Lower lobe of right lung (tissue), 2 donors: ENCODE measurements at regions of chr17 and their contacts with region 1.

Region 1: DNA sequence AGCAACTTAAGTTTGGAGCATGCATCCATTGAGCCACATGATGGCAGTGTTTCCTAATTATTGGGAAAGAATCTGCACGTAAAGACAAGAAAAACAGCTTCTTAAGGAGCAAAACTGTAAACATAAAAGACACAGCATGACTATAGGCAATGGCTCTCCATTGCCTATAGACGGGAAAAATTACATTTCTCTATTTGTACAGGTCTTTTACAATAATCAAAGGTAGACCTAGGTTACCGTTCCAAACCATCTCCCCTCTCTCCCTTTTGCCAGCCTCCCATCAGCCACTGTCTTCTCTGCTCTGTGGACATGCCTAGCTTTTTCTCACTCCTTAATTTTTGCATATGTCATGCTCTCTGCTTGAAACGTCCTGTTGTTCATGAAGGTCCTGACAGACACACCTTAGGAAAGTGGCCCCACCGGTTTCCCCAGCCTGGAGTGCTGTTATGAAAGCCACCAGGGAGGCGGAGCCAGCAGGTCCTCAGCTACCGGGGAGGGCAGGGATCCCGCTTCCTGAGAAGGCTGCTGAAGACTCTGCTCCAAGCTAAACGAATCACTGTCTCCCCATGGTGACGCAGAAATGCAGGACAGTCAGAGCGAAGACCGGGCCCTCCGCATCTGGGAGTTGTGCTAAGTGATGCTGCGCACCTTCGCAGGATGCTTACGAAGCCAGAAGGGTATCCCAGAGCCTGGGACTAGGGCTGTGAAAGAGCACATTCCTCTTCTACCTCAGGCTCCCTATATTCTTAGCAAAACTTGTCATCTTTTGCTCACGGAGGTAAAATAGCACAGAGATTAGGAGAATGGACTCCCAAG is 2.2 kb upstream of the SLC16A11 start:
- DNase-seq: peak; percentile 92
- ATAC-seq: peak; percentile 82 to 91
- H3K4me3 ChIP-seq: peak overlapping the region; percentile 46
- H3K27ac ChIP-seq: peak overlapping the region; percentile 85
- H3K4me1 ChIP-seq: peaks cover 29% of the 10 kb centered on the region
- H3K27me3 ChIP-seq: peaks cover 28% of the 10 kb centered on the region
- CTCF ChIP-seq: peak; percentile 84

Region 2: DNA sequence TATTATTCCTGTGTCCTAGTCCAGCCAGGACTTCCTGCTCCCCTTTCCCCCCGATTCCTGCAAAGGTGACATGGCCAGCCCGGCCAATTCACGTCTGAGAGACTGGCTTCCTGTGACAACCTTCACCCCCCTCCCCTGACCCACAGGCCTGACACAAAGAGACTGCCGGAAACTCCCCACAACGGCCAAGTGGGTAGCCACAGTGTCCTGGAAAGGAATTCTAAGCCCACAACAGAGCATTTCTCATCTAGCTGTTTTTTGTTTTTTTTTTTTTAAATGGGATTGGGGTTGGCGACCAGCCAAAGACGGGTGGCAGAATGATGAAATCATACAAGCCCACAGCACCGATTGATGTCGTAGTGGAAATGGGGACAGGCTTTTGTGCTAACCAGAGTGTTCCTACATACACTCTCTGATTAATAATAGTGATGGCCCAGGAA is 293.1 kb before region 1 on chr17:
- intact Hi-C with region 1: no loop called
- DNase-seq: peak; percentile 56
- ATAC-seq: peak; percentile 66 to 72
- H3K4me3 ChIP-seq: no peak overlapping the region
- H3K27ac ChIP-seq: peak overlapping the region; percentile 86
- H3K4me1 ChIP-seq: peaks cover 56% of the 10 kb centered on the region
- H3K27me3 ChIP-seq: no peaks in the 10 kb centered on the region
- CTCF ChIP-seq: no peak

Region 3: GRCh38 chr17:6843241-6843880 is 202.8 kb before region 1 on chr17:
- intact Hi-C with region 1: no loop called
- DNase-seq: no peak
- ATAC-seq: peak in 1 of 2 donors; percentile 61
- H3K4me3 ChIP-seq: no peak overlapping the region
- H3K27ac ChIP-seq: no peak overlapping the region
- H3K4me1 ChIP-seq: no peaks in the 10 kb centered on the region
- H3K27me3 ChIP-seq: peaks cover 41% of the 10 kb centered on the region
- CTCF ChIP-seq: peak; percentile 63

Region 4: DNA sequence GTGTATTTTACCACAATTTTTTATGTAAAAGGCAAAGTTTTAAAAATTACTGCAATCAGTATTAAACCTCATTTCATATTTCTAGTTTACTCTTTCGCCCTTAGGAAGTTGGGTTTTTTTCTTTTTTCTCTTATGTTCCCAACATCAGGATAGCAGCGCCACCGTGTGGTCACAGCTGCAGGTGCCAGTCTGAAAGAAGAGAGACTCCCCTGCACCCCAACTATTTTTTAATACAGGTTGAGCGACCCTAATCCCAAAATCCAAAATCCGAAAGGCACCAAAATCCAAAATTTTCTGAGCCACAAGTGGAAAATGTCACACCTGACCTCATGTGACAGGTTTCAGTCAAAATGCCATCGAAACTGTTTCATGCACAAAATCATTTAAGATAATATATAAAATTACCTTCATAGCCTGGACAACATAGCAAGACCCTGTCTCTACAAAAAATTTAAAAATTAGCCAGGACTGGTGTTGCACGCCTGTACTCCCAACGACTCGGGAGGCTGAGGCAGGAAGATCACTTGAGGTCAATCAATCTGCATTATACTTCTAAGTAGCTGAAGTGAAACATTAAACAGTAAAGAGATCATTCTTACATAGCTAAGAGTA is 90.3 kb after region 1 on chr17:
- intact Hi-C with region 1: loop called (anchors 5 kb)
- DNase-seq: peak; percentile 87
- ATAC-seq: peak; percentile 53 to 68
- H3K4me3 ChIP-seq: peak overlapping the region; percentile 20
- H3K27ac ChIP-seq: no peak overlapping the region
- H3K4me1 ChIP-seq: peaks cover 20% of the 10 kb centered on the region
- H3K27me3 ChIP-seq: peaks cover 9% of the 10 kb centered on the region
- CTCF ChIP-seq: peak; percentile 90